ENCODE measurements at regions of chr6 and their contacts with region 1.

Region 1: DNA sequence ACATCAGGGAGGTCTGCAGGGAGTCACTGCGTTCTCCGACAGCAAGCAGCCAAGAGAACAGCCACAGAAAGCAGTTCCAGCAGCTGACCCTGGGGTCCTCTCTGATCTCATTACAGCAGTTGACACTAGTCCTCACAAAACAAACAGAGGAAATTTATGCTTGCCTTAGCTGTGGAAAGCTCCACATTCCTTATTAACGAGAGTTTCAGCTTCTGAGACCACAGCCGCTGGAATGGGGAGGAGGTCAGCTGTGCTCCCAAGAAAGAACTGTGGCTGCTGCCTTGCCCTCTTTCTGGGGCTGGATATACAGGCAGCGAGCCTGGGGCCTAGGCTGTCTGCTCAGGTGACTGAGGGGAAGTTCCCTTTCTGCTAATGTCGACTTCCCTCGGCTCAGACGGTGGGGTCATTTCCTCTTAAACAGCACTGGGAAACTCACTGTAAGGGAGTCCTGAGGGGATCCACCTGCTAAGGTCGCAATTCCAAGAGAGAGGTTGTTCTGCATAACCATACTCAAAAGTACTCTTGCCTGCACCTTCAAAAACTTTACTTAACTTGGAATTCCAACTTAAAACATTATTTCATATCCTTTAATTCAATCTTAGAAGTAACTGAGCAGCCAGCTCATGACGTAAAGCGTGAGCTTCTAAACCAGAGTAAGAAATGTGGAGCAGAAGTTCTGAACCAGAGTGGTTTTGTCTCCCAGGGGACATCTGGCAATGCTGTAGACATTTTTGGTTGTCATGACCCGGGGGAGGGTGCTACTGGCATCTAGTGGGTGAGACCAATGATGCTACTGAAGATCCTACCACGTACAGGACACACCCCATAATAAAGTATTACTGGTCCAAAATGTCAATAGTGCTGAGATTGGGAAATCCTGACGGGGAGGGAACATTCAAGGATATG is 80.3 kb downstream of the BACH2 start:
- DNase-seq: no peak
- ATAC-seq: peak; percentile 45
- H3K4me3 Mint-ChIP-seq: peak overlapping the region; percentile 82
- H3K27ac Mint-ChIP-seq: no peak overlapping the region
- H3K4me1 Mint-ChIP-seq: peaks cover 46% of the 10 kb centered on the region
- H3K27me3 Mint-ChIP-seq: no peaks in the 10 kb centered on the region

Region 2: DNA sequence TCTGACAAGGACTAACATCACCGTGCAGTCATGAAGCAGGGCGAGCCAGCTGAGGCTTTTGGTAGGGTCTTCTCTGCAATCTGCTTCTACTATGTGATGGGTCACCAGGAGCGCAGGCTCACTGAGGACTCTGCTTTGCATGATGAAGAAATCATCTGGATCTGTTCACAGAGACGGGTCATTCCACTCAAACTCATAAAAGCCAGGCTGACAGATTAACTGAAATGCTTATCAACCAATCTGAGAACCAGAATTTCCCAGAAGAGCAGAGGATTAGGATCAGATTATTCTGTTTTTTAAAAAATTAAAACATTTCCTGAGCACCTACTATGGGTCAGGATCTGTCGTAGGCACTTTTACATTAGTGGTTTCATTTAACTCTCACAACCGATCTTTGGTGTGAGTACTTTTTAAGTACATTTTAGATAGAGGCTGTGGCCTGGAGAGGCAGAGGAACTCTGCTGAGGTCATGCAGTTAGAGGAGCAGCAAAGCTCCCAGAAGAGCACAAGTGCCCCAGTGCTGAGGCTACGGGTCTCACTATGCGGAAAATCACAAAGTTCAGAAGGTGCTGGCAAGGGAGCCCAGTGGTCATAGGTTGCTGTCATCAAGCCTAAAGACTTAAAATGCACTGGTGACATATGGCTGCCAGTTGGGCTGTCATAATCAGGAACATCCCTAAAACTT is 28.7 kb before region 1 on chr6:
- POLR2A ChIA-PET with region 1: interaction called, 10 read pairs
- DNase-seq: peak; percentile 52
- ATAC-seq: peak; percentile 70
- H3K4me3 Mint-ChIP-seq: peak overlapping the region; percentile 89
- H3K27ac Mint-ChIP-seq: peak overlapping the region; percentile 98
- H3K4me1 Mint-ChIP-seq: peaks cover 75% of the 10 kb centered on the region
- H3K27me3 Mint-ChIP-seq: no peaks in the 10 kb centered on the region

Region 3: DNA sequence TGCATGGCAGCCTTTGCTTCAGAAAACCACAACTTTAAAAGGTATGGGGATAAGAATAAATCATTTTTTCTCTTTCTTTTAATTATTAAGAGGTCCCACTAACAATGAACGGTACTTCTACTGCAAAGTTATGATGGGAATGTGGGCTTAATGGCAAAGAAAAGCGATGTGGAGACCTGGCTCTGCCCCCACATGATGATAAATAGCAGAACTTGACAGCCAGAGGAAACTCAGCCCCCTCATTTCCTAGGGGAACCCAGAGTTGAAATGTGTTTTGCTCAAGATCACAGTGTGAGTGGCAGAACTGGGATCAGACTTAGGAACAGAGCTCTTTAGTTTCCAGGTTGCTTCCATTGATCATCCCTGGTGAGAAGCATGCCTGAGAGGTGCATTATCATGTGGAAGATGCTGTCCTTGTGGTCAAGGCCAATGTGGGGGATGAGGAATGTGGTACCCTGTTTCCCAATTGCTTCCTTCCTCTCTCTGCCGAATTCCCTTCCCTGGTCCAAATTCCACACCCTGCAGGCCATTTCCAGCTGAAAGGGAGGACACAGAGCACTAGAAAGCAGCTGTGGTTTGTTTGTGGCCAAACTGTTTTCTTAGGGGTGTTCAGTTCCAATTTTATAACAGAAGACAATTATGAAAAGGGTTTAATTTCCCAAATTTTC is 14.4 kb after region 1 on chr6:
- POLR2A ChIA-PET with region 1: interaction called, 18 read pairs
- DNase-seq: no peak
- ATAC-seq: no peak
- H3K4me3 Mint-ChIP-seq: peak overlapping the region; percentile 51
- H3K27ac Mint-ChIP-seq: peak overlapping the region; percentile 56
- H3K4me1 Mint-ChIP-seq: peaks cover 83% of the 10 kb centered on the region
- H3K27me3 Mint-ChIP-seq: no peaks in the 10 kb centered on the region

Region 4: GRCh38 chr6:90238496-90239266 is 22.4 kb after region 1 on chr6:
- POLR2A ChIA-PET with region 1: interaction called, 15 read pairs
- DNase-seq: no peak
- ATAC-seq: no peak
- H3K4me3 Mint-ChIP-seq: peak overlapping the region; percentile 54
- H3K27ac Mint-ChIP-seq: peak overlapping the region; percentile 85
- H3K4me1 Mint-ChIP-seq: peaks cover 64% of the 10 kb centered on the region
- H3K27me3 Mint-ChIP-seq: no peaks in the 10 kb centered on the region

Region 5: DNA sequence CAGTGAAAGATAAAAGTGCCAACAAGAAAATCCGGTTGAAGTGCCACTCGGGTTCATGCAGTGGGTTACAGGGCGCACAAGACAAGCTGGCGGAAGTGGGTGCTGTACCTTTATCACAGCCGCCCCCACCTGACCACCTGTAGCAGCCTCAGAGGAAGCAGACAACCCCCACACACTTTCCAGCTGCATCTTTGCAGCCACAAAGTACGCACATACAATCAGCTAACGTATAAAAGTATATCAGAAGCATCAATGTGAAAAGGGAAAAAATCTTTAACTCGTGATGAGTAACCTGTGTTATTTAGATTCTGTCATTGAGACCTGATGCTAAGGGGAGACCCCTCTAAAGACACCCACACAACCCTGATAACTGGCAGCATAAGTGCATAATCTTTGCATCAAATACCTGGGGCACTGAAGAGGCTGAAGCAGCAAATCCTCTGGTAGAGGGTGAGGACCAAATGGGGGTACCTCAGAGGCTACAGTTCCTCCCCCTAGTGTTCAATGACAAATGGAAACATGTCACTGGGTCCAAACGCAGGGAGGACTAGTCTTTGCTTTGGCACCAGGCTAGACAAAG is 58.2 kb after region 1 on chr6:
- POLR2A ChIA-PET with region 1: interaction called, 29 read pairs
- DNase-seq: peak; percentile 76
- ATAC-seq: peak; percentile 81
- H3K4me3 Mint-ChIP-seq: peak overlapping the region; percentile 73
- H3K27ac Mint-ChIP-seq: peak overlapping the region; percentile 90
- H3K4me1 Mint-ChIP-seq: peaks cover 84% of the 10 kb centered on the region
- H3K27me3 Mint-ChIP-seq: no peaks in the 10 kb centered on the region

Region 6: DNA sequence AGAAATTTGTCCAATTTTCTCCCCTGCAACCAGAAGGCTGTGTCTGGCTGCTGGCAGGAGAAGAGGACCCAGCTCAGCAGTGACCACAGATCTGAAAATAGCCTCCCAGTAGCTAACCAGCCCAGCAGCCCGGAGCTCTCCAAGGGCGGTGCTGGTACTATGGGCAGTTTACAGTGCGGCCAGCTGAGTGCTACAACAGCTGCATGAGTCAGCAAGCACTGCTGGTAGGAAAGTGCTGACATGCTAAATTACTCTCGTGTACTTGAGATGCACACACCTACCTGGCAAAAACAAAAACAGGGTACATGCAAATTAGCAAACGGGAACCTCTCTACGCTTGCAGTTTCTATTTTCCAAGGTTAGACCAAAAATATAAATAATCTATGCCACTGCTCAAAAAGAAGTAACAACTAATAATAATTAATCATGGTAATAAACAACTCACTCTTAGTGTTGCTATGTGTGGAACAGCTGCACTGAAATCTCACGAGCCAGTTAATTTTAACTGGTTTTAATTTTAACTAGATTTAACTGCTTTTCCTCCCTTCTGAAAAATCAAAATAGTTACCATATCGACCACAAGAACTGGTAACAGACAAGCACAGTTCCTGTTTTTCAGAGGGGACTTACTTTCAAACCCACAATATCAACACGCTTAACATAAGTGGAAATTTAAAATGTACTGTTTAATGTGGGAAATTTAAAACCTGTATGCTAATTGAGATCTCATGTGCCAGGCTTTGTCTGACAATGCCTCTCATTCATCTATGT is 69.5 kb after region 1 on chr6:
- POLR2A ChIA-PET with region 1: interaction called, 34 read pairs
- DNase-seq: peak; percentile 56
- ATAC-seq: peak; percentile 44
- H3K4me3 Mint-ChIP-seq: peak overlapping the region; percentile 86
- H3K27ac Mint-ChIP-seq: peak overlapping the region; percentile 95
- H3K4me1 Mint-ChIP-seq: peaks cover 83% of the 10 kb centered on the region
- H3K27me3 Mint-ChIP-seq: no peaks in the 10 kb centered on the region